ENCODE measurements at regions of chr2 and their contacts with region 1.

Region 1: DNA sequence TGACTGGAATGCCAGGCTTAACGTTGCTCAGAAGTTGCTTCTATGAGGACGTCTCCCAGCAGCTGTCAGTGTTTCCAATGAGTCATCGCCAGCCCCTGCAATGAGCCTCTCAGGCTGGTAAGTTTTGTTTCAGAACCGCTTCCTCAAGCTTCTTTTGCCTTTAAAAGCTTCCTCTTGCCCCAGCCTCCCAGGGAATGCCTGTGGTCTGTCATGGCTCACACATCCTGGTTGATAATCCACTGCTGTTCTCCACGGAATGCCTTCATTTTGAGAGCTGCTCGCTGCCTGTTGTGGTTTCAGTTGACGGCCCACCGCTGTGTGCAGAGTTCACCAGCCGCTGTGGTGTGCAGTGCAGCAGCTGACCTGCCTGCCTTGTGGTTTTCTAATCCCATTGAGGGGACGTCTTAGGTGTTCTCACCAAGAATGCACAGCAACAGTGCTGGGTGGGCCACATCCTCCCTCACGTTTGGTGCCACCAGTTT is 96.4 kb downstream of the RTP5 start:
- DNase-seq: peak; percentile 90
- ATAC-seq: peak; percentile 93
- H3K4me3 Mint-ChIP-seq: peak overlapping the region; percentile 65
- H3K27ac Mint-ChIP-seq: peak overlapping the region; percentile 91
- H3K4me1 Mint-ChIP-seq: peaks cover 31% of the 10 kb centered on the region
- H3K27me3 Mint-ChIP-seq: no peaks in the 10 kb centered on the region

Region 2: DNA sequence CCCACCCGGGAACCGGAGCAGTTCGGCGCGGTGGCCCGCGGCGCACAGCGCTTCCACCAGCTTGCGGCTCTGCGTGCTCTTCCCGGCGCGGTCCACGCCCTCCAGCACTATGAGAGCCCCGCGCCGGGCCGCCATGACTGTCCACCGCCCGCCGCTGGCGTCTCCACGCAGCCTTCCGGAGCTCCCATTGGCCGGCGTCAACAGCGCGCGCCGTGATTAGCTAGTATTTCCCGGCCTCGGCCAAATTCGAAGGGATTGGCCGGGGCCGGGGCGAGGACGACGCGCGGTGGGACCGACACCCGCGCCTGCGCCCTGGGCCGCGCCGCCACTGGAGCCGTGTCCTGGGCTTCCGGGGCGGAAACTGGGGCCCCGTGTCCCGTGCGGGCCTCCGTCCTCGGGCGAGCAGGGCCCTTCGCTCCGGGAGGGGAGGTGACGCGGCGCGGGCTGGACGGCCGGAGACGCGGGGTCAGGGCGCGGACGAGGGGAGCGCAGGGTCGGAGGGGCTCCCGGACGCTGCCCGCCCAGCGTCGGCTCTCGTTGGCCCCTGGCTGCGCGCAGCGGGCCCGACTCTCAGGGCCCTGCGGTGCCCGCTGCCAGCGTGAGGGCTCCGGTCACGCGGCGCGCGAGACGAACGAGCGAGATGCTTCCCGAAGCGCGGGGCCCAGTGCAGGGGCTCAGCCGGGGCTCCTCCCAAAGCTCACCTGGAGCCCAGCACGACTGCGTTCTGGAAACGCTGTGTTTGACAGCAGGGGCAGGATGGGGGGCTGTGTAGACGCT is 279.1 kb before region 1 on chr2 and contains the start of gene DTYMK:
- CTCF ChIA-PET with region 1: no interaction called
- POLR2A ChIA-PET with region 1: interaction called, 10 read pairs
- intact Hi-C with region 1: no loop called
- DNase-seq: peak; percentile 98
- ATAC-seq: peak; percentile 96
- H3K4me3 Mint-ChIP-seq: peak within 1 kb of the TSS; percentile 98
- H3K27ac Mint-ChIP-seq: peak within 1 kb of the TSS; percentile 96
- H3K4me1 Mint-ChIP-seq: peaks cover 32% of the 10 kb centered on the region
- H3K27me3 Mint-ChIP-seq: no peaks in the 10 kb centered on the region
- total RNA-seq, gene DTYMK: 79.8 to 93.1 TPM

Region 3: DNA sequence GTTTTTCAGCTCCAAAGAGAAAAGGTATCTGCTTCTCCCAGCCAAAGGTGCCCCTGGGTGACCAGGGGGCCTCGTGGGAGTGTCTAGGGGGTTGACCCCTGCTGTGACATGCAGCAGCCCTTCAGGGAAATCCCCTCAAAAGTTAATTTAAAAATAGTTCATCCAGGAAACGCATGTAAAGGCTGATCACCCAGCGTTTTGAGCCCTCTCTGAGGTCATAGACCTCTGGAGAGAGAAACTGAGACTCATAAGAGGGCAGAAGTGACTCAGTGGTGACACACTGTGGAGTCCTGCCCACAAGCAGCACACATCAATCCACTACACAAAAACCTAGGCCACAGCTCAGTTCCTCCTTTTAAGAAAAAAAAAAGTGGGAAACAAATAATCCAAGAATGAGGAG is 177.4 kb before region 1 on chr2:
- CTCF ChIA-PET with region 1: no interaction called
- POLR2A ChIA-PET with region 1: no interaction called
- intact Hi-C with region 1: loop called in 1 of 2 experiments (anchors 1 kb)
- DNase-seq: peak; percentile 75
- ATAC-seq: peak; percentile 93
- H3K4me3 Mint-ChIP-seq: no peak overlapping the region
- H3K27ac Mint-ChIP-seq: peak overlapping the region; percentile 79
- H3K4me1 Mint-ChIP-seq: peaks cover 24% of the 10 kb centered on the region
- H3K27me3 Mint-ChIP-seq: peaks cover 3% of the 10 kb centered on the region

Region 4: DNA sequence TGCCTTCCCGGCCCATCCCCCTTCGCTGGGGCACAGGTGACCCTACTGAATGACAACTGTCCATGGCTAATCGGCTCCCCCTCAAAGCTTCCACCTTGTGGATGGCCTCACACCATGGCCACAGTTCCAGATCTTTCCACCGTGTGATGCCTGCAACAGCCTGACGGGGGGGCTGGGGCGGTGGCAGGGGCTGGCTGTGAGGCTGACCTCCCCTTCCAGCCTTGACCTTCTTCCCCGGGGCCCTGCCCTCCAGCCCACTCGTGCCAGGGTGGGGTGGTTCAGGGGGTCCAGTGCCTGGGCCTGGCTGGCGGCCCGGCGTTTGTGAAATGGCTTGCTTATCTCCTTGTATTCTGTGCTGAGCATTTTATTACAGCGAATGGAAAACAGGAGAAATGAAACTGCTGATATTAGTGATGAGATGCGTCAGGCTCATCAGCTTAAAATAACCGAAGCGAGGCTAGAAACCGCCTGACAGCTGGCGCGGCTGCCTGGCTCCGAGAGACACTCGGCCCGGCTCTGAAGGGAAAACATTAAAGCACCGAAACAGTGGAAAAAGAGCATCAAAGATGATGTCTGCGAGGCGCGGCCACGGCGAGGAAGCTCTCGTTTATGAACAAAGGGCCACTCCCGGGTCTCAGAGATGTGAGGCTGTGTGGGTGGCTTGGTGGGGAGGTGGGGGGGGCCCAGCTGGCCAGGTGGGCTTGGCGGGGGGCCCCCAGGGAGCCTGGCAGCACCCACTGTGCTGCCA is 106.4 kb before region 1 on chr2:
- CTCF ChIA-PET with region 1: no interaction called
- POLR2A ChIA-PET with region 1: no interaction called
- intact Hi-C with region 1: no loop called
- DNase-seq: peak; percentile 88
- ATAC-seq: peak; percentile 47
- H3K4me3 Mint-ChIP-seq: peak overlapping the region; percentile 85
- H3K27ac Mint-ChIP-seq: peak overlapping the region; percentile 95
- H3K4me1 Mint-ChIP-seq: peaks cover 63% of the 10 kb centered on the region
- H3K27me3 Mint-ChIP-seq: peaks cover 11% of the 10 kb centered on the region

Region 5: GRCh38 chr2:242010577-242011513 is 44.9 kb after region 1 on chr2:
- CTCF ChIA-PET with region 1: no interaction called
- POLR2A ChIA-PET with region 1: no interaction called
- intact Hi-C with region 1: loop called in 1 of 2 experiments (anchors 2 kb)
- DNase-seq: peak; percentile 39
- ATAC-seq: peak; percentile 47
- H3K4me3 Mint-ChIP-seq: no peak overlapping the region
- H3K27ac Mint-ChIP-seq: no peak overlapping the region
- H3K4me1 Mint-ChIP-seq: peaks cover 5% of the 10 kb centered on the region
- H3K27me3 Mint-ChIP-seq: no peaks in the 10 kb centered on the region

Region 6: GRCh38 chr2:242088471-242089212 is 122.7 kb after region 1 on chr2:
- CTCF ChIA-PET with region 1: no interaction called
- POLR2A ChIA-PET with region 1: no interaction called
- intact Hi-C with region 1: loop called (anchors 5 kb)
- DNase-seq: peak; percentile 95
- ATAC-seq: peak; percentile 96
- H3K4me3 Mint-ChIP-seq: peak overlapping the region; percentile 82
- H3K27ac Mint-ChIP-seq: peak overlapping the region; percentile 55
- H3K4me1 Mint-ChIP-seq: peaks cover 37% of the 10 kb centered on the region
- H3K27me3 Mint-ChIP-seq: peaks cover 3% of the 10 kb centered on the region

Measured in activated CD4-positive, alpha-beta T cell treated with anti-CD3 and anti-CD28 coated beads for 36 hours (primary cell).